Naive thymus-derived CD4-positive, alpha-beta T cell (primary cell): ENCODE measurements at regions of chr11 and their contacts with region 1.

Region 1: GRCh38 chr11:45804761-45805304 is at the start of gene SLC35C1:
- DNase-seq: peak; percentile 89 to 97 (median 93)
- ATAC-seq: peak; percentile 99
- H3K4me3 ChIP-seq: peak within 1 kb of the TSS; percentile 95
- H3K4me3 Mint-ChIP-seq: peak within 1 kb of the TSS; percentile 86 to 99 (median 92)
- H3K27ac ChIP-seq: peak within 1 kb of the TSS; percentile 87
- H3K27ac Mint-ChIP-seq: peak within 1 kb of the TSS; percentile 61 to 94 (median 91)
- H3K4me1 ChIP-seq: peaks cover 27 to 29% of the 10 kb centered on the region in 2 donors
- H3K4me1 Mint-ChIP-seq: peaks cover 31 to 43% (median 40%) of the 10 kb centered on the region in 7 donors
- H3K27me3 ChIP-seq: no peaks in the 10 kb centered on the region
- H3K27me3 Mint-ChIP-seq: no peaks in the 10 kb centered on the region
- total RNA-seq, gene SLC35C1: 7.9 to 22.8 (median 14.2) TPM

Region 2: GRCh38 chr11:45354976-45355705 is 449.7 kb before region 1 on chr11:
- CTCF ChIA-PET with region 1: no interaction called
- POLR2A ChIA-PET with region 1: no interaction called
- intact Hi-C with region 1: loop called in 1 of 2 experiments (anchors 1 kb)
- DNase-seq: peak; percentile 77 to 91 (median 88)
- ATAC-seq: peak; percentile 96
- H3K4me3 ChIP-seq: peak overlapping the region; percentile 93
- H3K4me3 Mint-ChIP-seq: peak overlapping the region; percentile 75 to 87 (median 82)
- H3K27ac ChIP-seq: peak overlapping the region; percentile 73
- H3K27ac Mint-ChIP-seq: peak overlapping the region; percentile 70 to 91 (median 83)
- H3K4me1 ChIP-seq: peaks cover 0 to 5% of the 10 kb centered on the region in 2 donors
- H3K4me1 Mint-ChIP-seq: peaks cover 9 to 31% (median 26%) of the 10 kb centered on the region in 7 donors
- H3K27me3 ChIP-seq: no peaks in the 10 kb centered on the region
- H3K27me3 Mint-ChIP-seq: peaks cover 0 to 28% (median 7%) of the 10 kb centered on the region in 5 donors

Region 3: DNA sequence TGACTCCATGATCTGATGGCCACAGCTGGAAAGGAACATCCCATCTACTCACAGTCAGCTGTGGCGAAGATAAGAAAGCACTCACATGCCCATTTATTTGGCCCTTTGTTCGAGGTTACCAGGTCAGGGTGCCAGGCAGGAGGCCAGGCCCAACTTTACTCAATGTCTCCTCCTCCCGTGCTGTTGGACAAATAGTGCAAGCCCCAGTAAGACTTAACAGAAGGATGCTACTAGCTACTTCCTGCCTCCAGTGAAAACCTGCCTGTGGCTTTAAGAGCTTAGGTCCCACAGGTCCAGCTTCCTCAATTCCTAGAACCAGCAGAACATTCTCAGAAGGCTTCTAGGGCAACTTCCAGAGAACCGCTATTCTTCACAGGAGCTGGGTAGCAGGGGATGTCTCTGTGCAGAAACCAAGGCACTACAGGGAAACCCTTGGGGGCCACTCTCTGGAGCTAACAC is 29.5 kb after region 1 on chr11:
- CTCF ChIA-PET with region 1: no interaction called
- POLR2A ChIA-PET with region 1: interaction called, 4 read pairs
- intact Hi-C with region 1: loop called in 1 of 2 experiments (anchors 1 kb)
- DNase-seq: peak in 1 of 9 donors; percentile 27
- ATAC-seq: peak; percentile 47
- H3K4me3 ChIP-seq: no peak overlapping the region
- H3K4me3 Mint-ChIP-seq: peak overlapping the region in 5 of 10 donors; percentile 0 to 88 (median 29)
- H3K27ac ChIP-seq: no peak overlapping the region
- H3K27ac Mint-ChIP-seq: peak overlapping the region in 3 of 9 donors; percentile 23 to 92 (median 71)
- H3K4me1 ChIP-seq: no peaks in the 10 kb centered on the region
- H3K4me1 Mint-ChIP-seq: peaks cover 7 to 40% (median 11%) of the 10 kb centered on the region in 7 donors
- H3K27me3 ChIP-seq: no peaks in the 10 kb centered on the region
- H3K27me3 Mint-ChIP-seq: peaks cover 0 to 31% (median 0%) of the 10 kb centered on the region in 5 donors

Region 4: GRCh38 chr11:46112961-46113617 is 308.3 kb after region 1 on chr11:
- CTCF ChIA-PET with region 1: no interaction called
- POLR2A ChIA-PET with region 1: no interaction called
- intact Hi-C with region 1: loop called in 1 of 2 experiments (anchors 2 kb)
- DNase-seq: peak in 7 of 9 donors; percentile 36 to 76 (median 55)
- ATAC-seq: peak; percentile 99
- H3K4me3 ChIP-seq: no peak overlapping the region
- H3K4me3 Mint-ChIP-seq: peak overlapping the region in 6 of 10 donors; percentile 27 to 57 (median 31)
- H3K27ac ChIP-seq: no peak overlapping the region
- H3K27ac Mint-ChIP-seq: peak overlapping the region in 4 of 9 donors; percentile 51 to 63 (median 56)
- H3K4me1 ChIP-seq: peaks cover 13 to 23% of the 10 kb centered on the region in 2 donors
- H3K4me1 Mint-ChIP-seq: peaks cover 24 to 57% (median 45%) of the 10 kb centered on the region in 7 donors
- H3K27me3 ChIP-seq: no peaks in the 10 kb centered on the region
- H3K27me3 Mint-ChIP-seq: no peaks in the 10 kb centered on the region